Heart right ventricle (tissue), 16 donors: ENCODE measurements at regions of chr3 and their contacts with region 1.

Region 1: DNA sequence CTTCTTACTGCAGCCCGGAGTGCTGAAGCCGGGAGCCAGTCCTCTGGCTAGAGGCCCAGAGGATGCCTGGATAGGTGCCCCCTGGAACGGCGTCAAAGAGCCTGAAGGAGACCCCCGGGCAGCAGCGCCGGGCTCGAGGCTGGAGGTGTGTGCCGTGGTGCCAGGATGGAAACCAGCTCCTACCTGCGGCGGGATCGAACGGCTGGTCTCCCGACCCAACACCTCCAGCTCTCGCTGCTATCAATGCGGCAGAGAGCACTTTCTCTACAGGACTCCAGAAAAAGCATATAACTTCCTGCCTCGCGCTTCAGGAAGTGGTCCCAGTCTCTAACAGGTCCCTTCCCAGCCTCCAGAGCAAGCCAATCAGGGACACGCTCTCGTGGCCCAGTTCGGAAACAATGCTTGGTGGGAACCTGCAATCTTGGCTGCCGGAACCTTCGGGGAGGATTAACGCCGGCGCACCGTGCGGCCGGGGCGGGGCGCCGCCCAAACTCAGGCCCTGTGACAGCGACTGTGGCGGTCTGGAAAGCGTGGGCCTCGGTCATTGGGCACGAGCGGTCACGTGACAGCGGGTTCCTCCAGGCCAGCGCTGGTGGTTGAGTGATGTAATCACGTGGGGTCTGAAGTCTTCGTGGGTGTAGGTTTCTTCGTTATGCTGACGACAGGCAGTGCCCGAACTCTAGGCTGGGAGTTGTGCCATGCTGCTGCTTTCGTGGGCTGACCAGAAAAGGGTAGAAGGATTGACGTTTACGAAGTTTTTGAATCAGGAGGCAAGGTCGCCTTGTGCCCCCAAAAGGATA is at the start of gene SLC33A1:
- DNase-seq: peak; percentile 98 to 99
- ATAC-seq: peak; percentile 98 to 99 (median 99)
- H3K4me3 ChIP-seq: peak within 1 kb of the TSS; percentile 74 to 100 (median 89)
- H3K27ac ChIP-seq: peak within 1 kb of the TSS; percentile 72 to 96 (median 92)
- H3K4me1 ChIP-seq: peaks cover 16 to 49% (median 45%) of the 10 kb centered on the region in 9 donors
- H3K27me3 ChIP-seq: no peaks in the 10 kb centered on the region
- CTCF ChIP-seq: no peak
- total RNA-seq, gene SLC33A1: 18.9 to 35.3 (median 25.8) TPM

Region 2: DNA sequence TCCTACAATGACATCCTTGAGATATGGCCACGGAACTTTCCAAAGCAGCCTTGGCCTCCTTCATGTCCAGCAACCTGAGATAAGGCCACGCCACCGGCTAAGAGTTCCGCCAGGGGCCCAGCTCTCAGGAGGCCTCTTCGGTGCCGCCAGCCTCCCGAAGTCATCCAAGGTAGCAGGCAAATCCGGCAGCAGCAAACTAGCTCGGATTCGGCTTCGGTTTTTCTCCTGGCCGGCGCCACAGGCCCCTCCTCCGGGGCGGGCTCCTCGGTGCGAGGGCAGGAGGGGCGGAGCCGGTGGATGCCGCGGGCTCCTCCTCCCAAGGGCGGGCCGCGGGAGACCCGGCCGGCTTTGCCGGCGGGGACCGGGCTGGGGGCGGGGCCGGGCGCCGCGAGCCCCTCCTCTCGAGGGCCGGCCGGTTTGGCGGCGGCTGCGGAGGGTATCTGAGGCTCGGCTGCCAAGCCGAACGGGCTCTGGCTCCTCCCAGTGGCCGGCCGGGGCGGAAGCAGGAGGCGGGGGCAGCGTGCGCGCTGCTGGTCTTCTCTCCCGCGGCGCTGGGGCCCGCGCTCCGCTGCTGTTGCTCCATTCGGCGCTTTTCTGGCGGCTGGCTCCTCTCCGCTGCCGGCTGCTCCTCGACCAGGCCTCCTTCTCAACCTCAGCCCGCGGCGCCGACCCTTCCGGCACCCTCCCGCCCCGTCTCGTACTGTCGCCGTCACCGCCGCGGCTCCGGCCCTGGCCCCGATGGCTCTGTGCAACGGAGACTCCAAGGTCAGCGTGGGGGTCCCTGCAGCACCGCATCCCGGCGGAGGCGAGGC is 16.0 kb after region 1 on chr3 and contains the start of gene GMPS:
- intact Hi-C with region 1: loop called in 3 of 10 experiments (anchors 1 to 2 kb)
- DNase-seq: peak; percentile 92 to 97
- ATAC-seq: peak; percentile 97 to 99 (median 98)
- H3K4me3 ChIP-seq: peak within 1 kb of the TSS; percentile 87 to 99 (median 97)
- H3K27ac ChIP-seq: peak within 1 kb of the TSS; percentile 60 to 97 (median 94)
- H3K4me1 ChIP-seq: peaks cover 0 to 34% (median 25%) of the 10 kb centered on the region in 9 donors
- H3K27me3 ChIP-seq: no peaks in the 10 kb centered on the region
- CTCF ChIP-seq: peak in 8 of 9 donors; percentile 49 to 75 (median 64)
- total RNA-seq, gene GMPS: 23.5 to 34.5 (median 30.6) TPM